ENCODE measurements at regions of chr10 and their contacts with region 1.

Region 1: GRCh38 chr10:73997787-73998622 is at the start of gene VCL:
- DNase-seq: peak; percentile 98 to 99 (median 98)
- ATAC-seq: peak; percentile 95
- H3K4me3 ChIP-seq: peak within 1 kb of the TSS; percentile 94
- H3K27ac ChIP-seq: peak within 1 kb of the TSS; percentile 94
- H3K4me1 ChIP-seq: peaks cover 47 to 48% of the 10 kb centered on the region in 2 experiments
- H3K27me3 ChIP-seq: no peaks in the 10 kb centered on the region; a peak in 1 of 5 replicates
- CTCF ChIP-seq: no peak
- EP300 ChIP-seq: peak; percentile 3
- POLR2A ChIP-seq: peak; percentile 99
- RAD21 ChIP-seq: peak in 1 of 2 experiments; percentile 2; a peak in 2 of 4 replicates
- polyA plus RNA-seq, gene VCL: 29.8 to 53.6 TPM

Region 2: DNA sequence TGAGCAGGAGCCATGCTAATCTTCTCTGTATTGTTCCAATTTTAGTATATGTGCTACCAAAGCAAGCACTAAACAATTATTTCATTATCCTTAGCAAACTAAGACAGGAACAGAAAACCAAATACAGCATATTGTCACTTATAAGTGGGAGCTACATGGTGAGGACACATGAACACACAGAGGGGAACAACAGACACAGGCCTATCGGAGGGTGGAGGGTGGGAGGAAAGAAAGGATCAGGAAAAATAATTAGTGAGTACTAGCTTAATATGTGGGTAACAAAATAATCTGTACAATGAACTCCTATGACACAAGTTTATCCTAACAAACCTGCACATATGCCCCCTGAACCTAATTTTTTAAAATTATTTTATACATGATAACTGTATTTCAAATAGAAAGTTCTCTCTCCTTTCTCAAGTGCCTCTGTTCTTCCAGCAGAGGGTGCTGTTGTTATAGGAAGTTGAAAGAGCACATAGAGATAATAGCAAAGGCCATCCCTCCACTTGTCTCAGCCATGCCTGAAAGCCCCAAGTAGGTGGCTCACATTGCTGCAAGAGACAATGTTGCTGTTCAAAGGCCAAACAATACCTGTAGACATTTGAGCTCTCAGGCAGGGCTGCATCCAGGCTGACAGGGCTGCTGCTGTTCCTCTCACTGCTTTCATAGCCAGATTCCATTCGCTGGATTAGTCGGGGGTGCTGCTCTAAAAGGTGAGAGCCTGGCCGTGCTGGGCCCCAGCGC is 468.7 kb before region 1 on chr10:
- CTCF ChIA-PET with region 1: no interaction called
- POLR2A ChIA-PET with region 1: no interaction called
- in situ Hi-C with region 1: no loop called
- intact Hi-C with region 1: no loop called
- DNase-seq: peak; percentile 78 to 87 (median 82)
- ATAC-seq: peak; percentile 98
- H3K4me3 ChIP-seq: no peak overlapping the region
- H3K27ac ChIP-seq: no peak overlapping the region
- H3K4me1 ChIP-seq: peaks cover 0 to 2% of the 10 kb centered on the region in 2 experiments; a peak in 3 of 5 replicates
- H3K27me3 ChIP-seq: no peaks in the 10 kb centered on the region
- CTCF ChIP-seq: peak; percentile 82 to 98 (median 83)
- EP300 ChIP-seq: no peak; the same call in 1 of the 2 replicates
- POLR2A ChIP-seq: no peak
- RAD21 ChIP-seq: peak; percentile 100

Region 3: GRCh38 chr10:73956476-73957359 is 41.3 kb before region 1 on chr10:
- CTCF ChIA-PET with region 1: no interaction called
- POLR2A ChIA-PET with region 1: interaction called, 6 read pairs
- in situ Hi-C with region 1: no loop called
- intact Hi-C with region 1: loop called (anchors 2 kb)
- DNase-seq: peak; percentile 44 to 92 (median 67)
- ATAC-seq: peak; percentile 85
- H3K4me3 ChIP-seq: no peak overlapping the region; the same call in 1 of the 2 replicates
- H3K27ac ChIP-seq: peak overlapping the region; percentile 72
- H3K4me1 ChIP-seq: peaks cover 35 to 36% of the 10 kb centered on the region in 2 experiments
- H3K27me3 ChIP-seq: no peaks in the 10 kb centered on the region
- CTCF ChIP-seq: no peak; a peak in 1 of 6 replicates
- EP300 ChIP-seq: peak; percentile 97
- POLR2A ChIP-seq: peak; percentile 54; the same call in 1 of the 2 replicates
- RAD21 ChIP-seq: peak; percentile 16 to 49; a peak in 3 of 4 replicates

Region 4: GRCh38 chr10:74008212-74008731 is 10.3 kb after region 1 on chr10:
- CTCF ChIA-PET with region 1: no interaction called
- POLR2A ChIA-PET with region 1: interaction called, 109 read pairs
- in situ Hi-C with region 1: no loop called
- intact Hi-C with region 1: no loop called
- DNase-seq: no peak
- ATAC-seq: peak; percentile 5
- H3K4me3 ChIP-seq: no peak overlapping the region
- H3K27ac ChIP-seq: peak overlapping the region; percentile 65
- H3K4me1 ChIP-seq: peaks cover 37 to 51% of the 10 kb centered on the region in 2 experiments
- H3K27me3 ChIP-seq: no peaks in the 10 kb centered on the region
- CTCF ChIP-seq: no peak
- EP300 ChIP-seq: 0 out of 2 replicates have a peak, but pooled peaks have one; percentile 12
- POLR2A ChIP-seq: no peak
- RAD21 ChIP-seq: no peak

Region 5: GRCh38 chr10:74021248-74022055 is 23.4 kb after region 1 on chr10:
- CTCF ChIA-PET with region 1: no interaction called
- POLR2A ChIA-PET with region 1: interaction called, 109 read pairs
- in situ Hi-C with region 1: no loop called
- intact Hi-C with region 1: loop called (anchors 1 kb)
- DNase-seq: peak in 3 of 4 experiments; percentile 45 to 80 (median 77)
- ATAC-seq: peak; percentile 81
- H3K4me3 ChIP-seq: peak overlapping the region; percentile 11; the same call in 1 of the 2 replicates
- H3K27ac ChIP-seq: peak overlapping the region; percentile 95
- H3K4me1 ChIP-seq: peaks cover 22 to 70% of the 10 kb centered on the region in 2 experiments
- H3K27me3 ChIP-seq: no peaks in the 10 kb centered on the region
- CTCF ChIP-seq: no peak
- EP300 ChIP-seq: peak; percentile 98
- POLR2A ChIP-seq: no peak
- RAD21 ChIP-seq: no peak; a peak in 2 of 4 replicates

Region 6: GRCh38 chr10:74026428-74027015 is 28.5 kb after region 1 on chr10:
- CTCF ChIA-PET with region 1: no interaction called
- POLR2A ChIA-PET with region 1: interaction called, 17 read pairs
- in situ Hi-C with region 1: no loop called
- intact Hi-C with region 1: loop called (anchors 1 kb)
- DNase-seq: peak in 2 of 4 experiments; percentile 43 to 47
- ATAC-seq: peak; percentile 25
- H3K4me3 ChIP-seq: no peak overlapping the region
- H3K27ac ChIP-seq: peak overlapping the region; percentile 24; the same call in 1 of the 3 replicates
- H3K4me1 ChIP-seq: peaks cover 19 to 75% of the 10 kb centered on the region in 2 experiments
- H3K27me3 ChIP-seq: no peaks in the 10 kb centered on the region
- CTCF ChIP-seq: peak; percentile 12 to 35 (median 18); a peak in 3 of 6 replicates
- EP300 ChIP-seq: peak; percentile 60
- POLR2A ChIP-seq: no peak
- RAD21 ChIP-seq: no peak; a peak in 1 of 4 replicates

Region 7: GRCh38 chr10:74081192-74081803 is 83.3 kb after region 1 on chr10:
- CTCF ChIA-PET with region 1: no interaction called
- POLR2A ChIA-PET with region 1: interaction called, 4 read pairs
- in situ Hi-C with region 1: no loop called
- intact Hi-C with region 1: loop called (anchors 5 kb)
- DNase-seq: peak; percentile 55 to 80 (median 68)
- ATAC-seq: peak; percentile 92
- H3K4me3 ChIP-seq: no peak overlapping the region
- H3K27ac ChIP-seq: no peak overlapping the region
- H3K4me1 ChIP-seq: peaks cover 0 to 15% of the 10 kb centered on the region in 2 experiments; a peak in 1 of 5 replicates
- H3K27me3 ChIP-seq: no peaks in the 10 kb centered on the region
- CTCF ChIP-seq: peak; percentile 79 to 85 (median 82)
- EP300 ChIP-seq: no peak
- POLR2A ChIP-seq: no peak
- RAD21 ChIP-seq: peak; percentile 84 to 86